Naive thymus-derived CD4-positive, alpha-beta T cell (primary cell): ENCODE measurements at regions of chr4 and their contacts with region 1.

Region 1: DNA sequence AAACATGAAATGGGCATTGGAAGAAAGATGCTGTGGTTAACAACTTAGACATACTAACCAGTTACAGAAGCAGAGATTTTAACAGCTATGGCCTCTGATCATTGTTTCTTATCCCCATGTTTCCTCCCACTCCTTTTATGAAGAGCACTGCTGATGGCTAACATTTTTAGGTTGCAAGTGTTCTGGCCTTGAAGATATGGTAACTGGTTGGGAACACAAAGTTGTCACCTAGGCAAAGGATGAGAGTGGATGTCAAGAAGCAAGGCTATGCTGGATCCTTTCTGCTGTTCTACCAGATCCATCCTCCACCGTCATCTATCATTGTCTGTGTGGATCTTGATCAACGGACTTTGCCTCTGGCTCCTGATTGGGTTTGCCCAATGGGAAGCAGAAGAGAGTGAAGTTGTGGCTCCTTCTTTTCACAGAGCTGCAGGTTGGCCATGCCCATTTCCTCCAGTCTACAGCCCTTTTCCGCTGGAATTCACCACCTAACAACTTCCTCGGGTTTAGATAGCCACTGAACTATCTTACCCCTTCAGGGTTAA is 48.9 kb upstream of the SPP1 start:
- DNase-seq: no peak
- ATAC-seq: no peak
- H3K4me3 ChIP-seq: no peak overlapping the region
- H3K4me3 Mint-ChIP-seq: no peak overlapping the region
- H3K27ac ChIP-seq: no peak overlapping the region
- H3K27ac Mint-ChIP-seq: no peak overlapping the region
- H3K4me1 ChIP-seq: no peaks in the 10 kb centered on the region
- H3K4me1 Mint-ChIP-seq: no peaks in the 10 kb centered on the region
- H3K27me3 ChIP-seq: no peaks in the 10 kb centered on the region
- H3K27me3 Mint-ChIP-seq: peaks cover 8 to 24% (median 9%) of the 10 kb centered on the region in 5 donors

Region 2: DNA sequence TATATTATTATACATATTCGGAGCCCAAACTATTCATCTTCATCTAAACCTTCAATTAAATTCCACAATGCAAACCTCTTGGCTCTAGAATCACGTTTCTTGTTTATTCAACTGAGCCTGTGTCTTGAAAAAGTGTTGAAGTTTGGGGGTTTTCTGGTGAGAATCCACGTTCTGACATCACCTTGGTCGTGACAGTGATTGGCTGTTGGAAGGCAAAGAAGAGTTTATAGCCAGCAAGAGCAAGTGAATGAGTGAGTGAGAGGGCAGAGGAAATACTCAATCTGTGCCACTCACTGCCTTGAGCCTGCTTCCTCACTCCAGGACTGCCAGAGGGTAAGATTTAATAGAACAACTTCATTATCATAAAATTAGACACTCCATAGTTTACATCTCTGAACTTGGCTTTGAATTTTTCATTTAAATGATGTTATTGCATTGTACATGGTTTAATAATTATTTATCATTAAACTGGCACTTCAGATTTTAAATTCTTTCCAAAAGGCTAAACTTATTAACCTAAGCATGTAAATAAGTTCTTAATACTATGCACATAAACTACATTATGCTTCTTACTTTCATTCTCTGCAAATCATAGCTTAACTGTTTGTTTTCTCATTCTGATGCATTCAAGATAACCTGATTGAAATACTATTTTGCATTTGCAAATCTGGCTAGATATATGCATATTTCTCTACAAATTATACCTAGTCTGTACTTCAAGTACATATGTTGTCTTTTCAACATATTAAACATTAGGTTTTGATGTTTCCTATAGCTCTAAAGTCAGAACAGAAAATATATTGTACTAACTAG is 127.1 kb before region 1 on chr4 and contains the start of gene IBSP:
- CTCF ChIA-PET with region 1: no interaction called
- POLR2A ChIA-PET with region 1: no interaction called
- intact Hi-C with region 1: no loop called
- DNase-seq: no peak
- ATAC-seq: no peak
- H3K4me3 ChIP-seq: no peak within 1 kb of the TSS
- H3K4me3 Mint-ChIP-seq: no peak within 1 kb of the TSS
- H3K27ac ChIP-seq: no peak within 1 kb of the TSS
- H3K27ac Mint-ChIP-seq: no peak within 1 kb of the TSS
- H3K4me1 ChIP-seq: no peaks in the 10 kb centered on the region
- H3K4me1 Mint-ChIP-seq: no peaks in the 10 kb centered on the region
- H3K27me3 ChIP-seq: no peaks in the 10 kb centered on the region
- H3K27me3 Mint-ChIP-seq: peaks cover 0 to 8% (median 8%) of the 10 kb centered on the region in 5 donors
- total RNA-seq, gene IBSP: not detected

Region 3: GRCh38 chr4:87938746-87939145 is 12.1 kb after region 1 on chr4:
- CTCF ChIA-PET with region 1: no interaction called
- POLR2A ChIA-PET with region 1: no interaction called
- intact Hi-C with region 1: loop called in 1 of 2 experiments (anchors 1 kb)
- DNase-seq: no peak
- ATAC-seq: no peak
- H3K4me3 ChIP-seq: no peak overlapping the region
- H3K4me3 Mint-ChIP-seq: no peak overlapping the region
- H3K27ac ChIP-seq: no peak overlapping the region
- H3K27ac Mint-ChIP-seq: no peak overlapping the region
- H3K4me1 ChIP-seq: no peaks in the 10 kb centered on the region
- H3K4me1 Mint-ChIP-seq: no peaks in the 10 kb centered on the region
- H3K27me3 ChIP-seq: no peaks in the 10 kb centered on the region
- H3K27me3 Mint-ChIP-seq: peaks cover 0 to 17% (median 4%) of the 10 kb centered on the region in 5 donors